Activated T-helper 1 cell treated with anti-CD3 and anti-CD28 coated beads, Interleukin-12 subunit alpha, Interleukin-12 subunit beta, Interleukin-2, Interleukin-4 antibody, amounts not matched to agents 30 ng/mL and 10 ng/mL and 1 ng/mL, durations not matched to agents 14 hours and 24 hours and 36 hours (primary cell): ENCODE measurements at regions of chr9 and their contacts with region 1.

Region 1: DNA sequence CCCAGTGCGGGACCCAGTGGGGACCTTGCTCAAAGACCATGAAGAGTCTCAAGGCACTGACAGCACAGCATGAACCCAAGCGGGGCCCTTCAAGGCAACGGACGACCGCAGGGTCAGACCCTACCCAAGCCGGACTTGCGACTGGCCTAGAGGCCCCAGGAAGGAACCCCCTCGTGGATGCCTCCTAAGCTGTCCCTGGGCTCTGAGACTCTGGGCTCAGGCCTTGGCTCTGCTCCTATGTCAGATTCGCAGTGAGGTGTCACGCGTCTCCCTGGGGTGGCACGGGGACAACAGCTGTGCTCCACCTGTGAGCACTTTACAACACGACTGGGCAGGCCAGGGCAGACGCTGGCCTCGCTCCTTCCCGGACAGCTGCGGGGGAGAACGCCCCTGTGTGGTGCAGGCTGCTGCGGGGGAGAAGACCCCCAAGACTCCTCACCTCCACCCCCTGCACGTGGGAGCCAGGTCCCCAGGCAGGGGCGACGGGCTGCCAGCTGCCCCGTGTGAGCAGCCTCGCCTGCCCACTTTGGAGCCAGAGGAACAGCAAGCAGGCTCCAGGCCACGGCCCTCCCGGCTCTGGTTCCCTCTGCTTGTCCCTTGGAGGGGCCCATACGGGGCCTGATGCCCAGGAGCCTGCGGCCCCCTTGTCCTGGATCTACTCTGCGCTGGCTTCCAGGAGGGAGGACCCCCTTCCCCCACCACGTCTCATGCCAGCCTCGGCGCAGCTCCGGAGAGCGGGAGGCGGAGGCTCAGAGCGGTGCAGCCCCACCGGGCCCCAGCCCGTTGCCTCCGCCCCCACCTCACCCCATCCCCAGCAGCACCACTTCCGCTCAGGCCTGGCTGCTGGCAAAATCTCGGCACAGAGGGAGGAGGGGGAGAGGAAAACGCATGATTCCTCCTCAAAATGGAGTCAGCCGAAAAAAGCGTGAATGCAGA is 36.0 kb downstream of the SARDH start:
- DNase-seq: peak; percentile 33
- H3K4me3 Mint-ChIP-seq: peak overlapping the region; percentile 65
- H3K27ac Mint-ChIP-seq: peak overlapping the region; percentile 72
- H3K4me1 Mint-ChIP-seq: peaks cover 26% of the 10 kb centered on the region
- H3K27me3 Mint-ChIP-seq: peaks cover 15% of the 10 kb centered on the region

Region 2: GRCh38 chr9:133558191-133559126 is 143.7 kb before region 1 on chr9:
- intact Hi-C with region 1: no loop called
- DNase-seq: no peak
- H3K4me3 Mint-ChIP-seq: no peak overlapping the region
- H3K27ac Mint-ChIP-seq: no peak overlapping the region
- H3K4me1 Mint-ChIP-seq: peaks cover 4% of the 10 kb centered on the region
- H3K27me3 Mint-ChIP-seq: no peaks in the 10 kb centered on the region

Region 3: GRCh38 chr9:133683586-133684120 is 18.5 kb before region 1 on chr9:
- intact Hi-C with region 1: loop called (anchors 2 kb)
- DNase-seq: peak; percentile 57
- H3K4me3 Mint-ChIP-seq: peak overlapping the region; percentile 71
- H3K27ac Mint-ChIP-seq: peak overlapping the region; percentile 95
- H3K4me1 Mint-ChIP-seq: peaks cover 16% of the 10 kb centered on the region
- H3K27me3 Mint-ChIP-seq: no peaks in the 10 kb centered on the region

Region 4: GRCh38 chr9:133792721-133793470 is 90.8 kb after region 1 on chr9:
- intact Hi-C with region 1: no loop called
- DNase-seq: peak; percentile 29
- H3K4me3 Mint-ChIP-seq: no peak overlapping the region
- H3K27ac Mint-ChIP-seq: no peak overlapping the region
- H3K4me1 Mint-ChIP-seq: no peaks in the 10 kb centered on the region
- H3K27me3 Mint-ChIP-seq: no peaks in the 10 kb centered on the region